GM12878 (cell line): ENCODE measurements at regions of chr6 and their contacts with region 1.

Region 1: DNA sequence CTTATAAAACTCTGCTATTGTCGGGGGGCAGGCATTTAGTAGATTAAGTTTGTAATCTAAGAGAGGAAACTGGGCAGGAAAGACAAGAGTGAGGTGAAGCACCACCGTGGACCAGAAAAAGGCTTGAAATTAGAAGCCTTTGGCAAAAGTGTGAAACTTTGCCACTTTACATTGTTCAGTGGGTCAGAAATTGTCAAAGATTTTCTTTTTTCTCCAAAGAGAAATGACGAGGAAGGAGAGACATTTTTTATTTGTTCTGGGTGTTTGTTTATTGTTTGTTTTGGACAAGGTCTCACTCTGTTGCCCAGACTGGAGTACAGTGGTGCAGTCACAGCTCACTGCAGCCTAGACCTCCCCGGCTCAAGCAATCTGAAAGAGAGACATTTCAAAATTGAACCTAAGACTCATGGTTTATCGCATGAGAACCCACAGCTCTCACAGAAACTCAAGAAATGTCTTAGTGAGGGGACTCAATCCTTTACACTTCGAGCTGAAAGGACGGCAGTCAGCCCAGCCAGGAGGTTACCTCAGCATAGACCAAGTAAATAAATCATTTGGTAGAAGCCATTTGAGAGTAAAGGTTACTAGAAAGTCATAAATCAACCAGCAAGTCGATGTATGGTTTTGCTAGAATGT is 262.8 kb upstream of the TAB2 start:
- DNase-seq: peak; percentile 86
- ATAC-seq: peak; percentile 85
- H3K4me3 ChIP-seq: peak overlapping the region; percentile 53; the same call in 1 of the 2 replicates
- H3K27ac ChIP-seq: peak overlapping the region; percentile 90
- H3K4me1 ChIP-seq: peaks cover 37% of the 10 kb centered on the region
- H3K27me3 ChIP-seq: no peaks in the 10 kb centered on the region
- CTCF ChIP-seq: no peak
- EP300 ChIP-seq: no peak
- POLR2A ChIP-seq: no peak
- RAD21 ChIP-seq: no peak

Region 2: GRCh38 chr6:149043476-149044130 is 11.1 kb before region 1 on chr6:
- CTCF ChIA-PET with region 1: interaction called, 174 read pairs
- POLR2A ChIA-PET with region 1: interaction called, 298 read pairs
- RAD21 ChIA-PET with region 1: interaction called, 521 read pairs
- SMC1A ChIA-PET with region 1: interaction called, 1,060 read pairs
- in situ Hi-C with region 1: no loop called
- intact Hi-C with region 1: loop called (anchors 1 kb)
- DNase-seq: no peak
- ATAC-seq: peak; percentile 43
- H3K4me3 ChIP-seq: no peak overlapping the region
- H3K27ac ChIP-seq: no peak overlapping the region
- H3K4me1 ChIP-seq: peaks cover 46% of the 10 kb centered on the region
- H3K27me3 ChIP-seq: no peaks in the 10 kb centered on the region
- CTCF ChIP-seq: peak; percentile 45 to 62 (median 45)
- EP300 ChIP-seq: no peak
- POLR2A ChIP-seq: no peak
- RAD21 ChIP-seq: peak; percentile 53; the same call in 1 of the 2 replicates

Region 3: DNA sequence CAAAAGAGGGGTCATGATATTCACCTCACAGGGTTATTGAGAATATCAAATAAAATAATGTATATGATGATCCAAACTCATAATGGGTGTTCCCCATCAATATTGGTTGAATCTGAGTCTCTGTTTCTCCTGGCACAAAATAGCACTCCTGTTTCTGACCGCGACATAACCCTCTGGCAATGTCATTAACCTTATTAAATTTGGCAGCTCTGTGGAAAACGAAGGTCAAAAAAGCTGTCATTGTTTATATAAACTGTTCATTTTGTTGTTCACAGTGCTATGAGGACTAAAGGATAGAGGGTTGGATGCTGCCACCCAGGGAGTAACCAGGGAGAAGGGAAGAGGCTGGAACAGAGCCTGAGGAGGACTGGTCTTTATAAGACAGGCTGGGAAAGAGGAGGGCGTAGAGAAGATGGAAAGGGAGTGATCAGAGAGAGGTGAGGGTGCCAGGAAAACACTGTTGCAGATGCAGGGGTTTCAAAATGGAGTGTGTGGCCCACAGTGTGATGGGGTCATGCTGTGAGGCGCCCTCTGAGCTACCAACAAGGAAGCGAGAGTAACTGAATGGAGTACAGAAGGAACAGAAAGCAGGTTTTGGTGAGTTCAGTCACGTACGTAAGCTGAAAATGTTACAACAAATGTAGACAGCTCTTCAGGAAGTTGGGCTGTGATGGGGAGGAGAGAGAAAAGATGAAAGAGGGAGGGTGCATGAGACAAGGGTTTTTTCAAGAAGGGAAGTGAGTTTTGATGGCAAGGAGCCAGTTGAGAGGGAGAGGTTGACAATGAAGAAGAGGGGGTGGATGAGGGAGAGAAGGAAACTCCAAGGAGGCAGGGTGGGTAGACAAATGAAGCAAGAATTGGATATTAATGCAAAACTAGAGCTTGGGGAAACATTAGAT is 11.2 kb after region 1 on chr6:
- CTCF ChIA-PET with region 1: interaction called, 174 read pairs
- POLR2A ChIA-PET with region 1: interaction called, 298 read pairs
- RAD21 ChIA-PET with region 1: interaction called, 379 read pairs
- SMC1A ChIA-PET with region 1: interaction called, 1,060 read pairs
- in situ Hi-C with region 1: no loop called
- intact Hi-C with region 1: no loop called
- DNase-seq: peak; percentile 99
- ATAC-seq: peak; percentile 95
- H3K4me3 ChIP-seq: no peak overlapping the region; the same call in 1 of the 2 replicates
- H3K27ac ChIP-seq: peak overlapping the region; percentile 95
- H3K4me1 ChIP-seq: peaks cover 42% of the 10 kb centered on the region
- H3K27me3 ChIP-seq: no peaks in the 10 kb centered on the region
- CTCF ChIP-seq: no peak
- EP300 ChIP-seq: peak; percentile 91 to 97; a peak in 3 of 4 replicates
- POLR2A ChIP-seq: peak; percentile 76
- RAD21 ChIP-seq: no peak; the same call in 1 of the 2 replicates

Region 4: GRCh38 chr6:149075616-149076364 is 21.1 kb after region 1 on chr6:
- CTCF ChIA-PET with region 1: interaction called, 5 read pairs
- POLR2A ChIA-PET with region 1: interaction called, 4 read pairs
- RAD21 ChIA-PET with region 1: interaction called, 16 read pairs
- SMC1A ChIA-PET with region 1: interaction called, 1,060 read pairs
- in situ Hi-C with region 1: no loop called
- intact Hi-C with region 1: loop called (anchors 1 kb)
- DNase-seq: no peak
- ATAC-seq: no peak
- H3K4me3 ChIP-seq: no peak overlapping the region
- H3K27ac ChIP-seq: no peak overlapping the region
- H3K4me1 ChIP-seq: peaks cover 31% of the 10 kb centered on the region
- H3K27me3 ChIP-seq: no peaks in the 10 kb centered on the region
- CTCF ChIP-seq: no peak
- EP300 ChIP-seq: no peak
- POLR2A ChIP-seq: no peak
- RAD21 ChIP-seq: no peak